Activated naive CD4-positive, alpha-beta T cell treated with anti-CD3 and anti-CD28 coated beads for 36 hours (primary cell): ENCODE measurements at regions of chr1 and their contacts with region 1.

Region 1: DNA sequence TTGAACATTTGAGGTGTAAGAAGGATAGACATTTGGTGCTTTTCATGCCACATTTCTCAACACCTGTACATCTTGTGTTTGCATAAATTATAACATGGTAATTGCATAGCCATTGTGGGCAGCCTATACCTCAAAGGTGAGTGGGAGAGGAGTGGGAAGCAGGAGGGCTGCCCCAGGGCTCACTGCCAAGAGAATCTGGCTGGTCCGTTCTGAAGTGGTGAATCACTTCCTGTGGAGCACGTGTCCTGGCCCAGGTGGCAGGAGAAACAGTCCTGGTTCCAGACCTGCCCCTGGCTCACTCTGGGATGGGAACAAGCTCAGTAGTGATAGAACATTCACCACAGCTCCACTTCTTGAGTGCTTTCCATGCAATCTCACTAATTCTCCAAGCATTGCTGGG is 11.6 kb upstream of the OLFML2B start:
- DNase-seq: peak; percentile 39
- H3K4me3 Mint-ChIP-seq: no peak overlapping the region
- H3K27ac Mint-ChIP-seq: no peak overlapping the region
- H3K4me1 Mint-ChIP-seq: peaks cover 11% of the 10 kb centered on the region
- H3K27me3 Mint-ChIP-seq: peaks cover 3% of the 10 kb centered on the region

Region 2: GRCh38 chr1:161486806-161487741 is 548.2 kb before region 1 on chr1:
- CTCF ChIA-PET with region 1: interaction called, 4 read pairs
- intact Hi-C with region 1: loop called (anchors 10 kb)
- DNase-seq: peak; percentile 50
- H3K4me3 Mint-ChIP-seq: no peak overlapping the region
- H3K27ac Mint-ChIP-seq: no peak overlapping the region
- H3K4me1 Mint-ChIP-seq: peaks cover 10% of the 10 kb centered on the region
- H3K27me3 Mint-ChIP-seq: peaks cover 24% of the 10 kb centered on the region

Region 3: GRCh38 chr1:161749509-161750407 is 285.5 kb before region 1 on chr1 and contains the start of gene DUSP12:
- CTCF ChIA-PET with region 1: interaction called, 13 read pairs
- intact Hi-C with region 1: no loop called
- DNase-seq: peak; percentile 94
- H3K4me3 Mint-ChIP-seq: peak within 1 kb of the TSS; percentile 98
- H3K27ac Mint-ChIP-seq: peak within 1 kb of the TSS; percentile 98
- H3K4me1 Mint-ChIP-seq: peaks cover 45% of the 10 kb centered on the region
- H3K27me3 Mint-ChIP-seq: no peaks in the 10 kb centered on the region
- total RNA-seq, gene DUSP12: 28.2 to 28.4 TPM

Region 4: GRCh38 chr1:161858271-161858670 is 177.0 kb before region 1 on chr1:
- CTCF ChIA-PET with region 1: interaction called, 14 read pairs
- intact Hi-C with region 1: no loop called
- DNase-seq: no peak
- H3K4me3 Mint-ChIP-seq: no peak overlapping the region
- H3K27ac Mint-ChIP-seq: no peak overlapping the region
- H3K4me1 Mint-ChIP-seq: no peaks in the 10 kb centered on the region
- H3K27me3 Mint-ChIP-seq: no peaks in the 10 kb centered on the region

Region 5: GRCh38 chr1:161864577-161864976 is 170.7 kb before region 1 on chr1:
- CTCF ChIA-PET with region 1: interaction called, 14 read pairs
- intact Hi-C with region 1: loop called (anchors 1 kb)
- DNase-seq: peak; percentile 17
- H3K4me3 Mint-ChIP-seq: no peak overlapping the region
- H3K27ac Mint-ChIP-seq: no peak overlapping the region
- H3K4me1 Mint-ChIP-seq: no peaks in the 10 kb centered on the region
- H3K27me3 Mint-ChIP-seq: no peaks in the 10 kb centered on the region

Region 6: GRCh38 chr1:162023547-162024501 is 11.4 kb before region 1 on chr1 and contains the start of gene OLFML2B:
- CTCF ChIA-PET with region 1: interaction called, 23 read pairs
- intact Hi-C with region 1: no loop called
- DNase-seq: peak; percentile 65
- H3K4me3 Mint-ChIP-seq: peak within 1 kb of the TSS; percentile 86
- H3K27ac Mint-ChIP-seq: no peak within 1 kb of the TSS
- H3K4me1 Mint-ChIP-seq: peaks cover 7% of the 10 kb centered on the region
- H3K27me3 Mint-ChIP-seq: peaks cover 18% of the 10 kb centered on the region
- total RNA-seq, gene OLFML2B: 1.7 to 2.3 TPM

Region 7: GRCh38 chr1:162091681-162092524 is 56.7 kb after region 1 on chr1:
- CTCF ChIA-PET with region 1: no interaction called
- intact Hi-C with region 1: no loop called
- DNase-seq: no peak
- H3K4me3 Mint-ChIP-seq: no peak overlapping the region
- H3K27ac Mint-ChIP-seq: no peak overlapping the region
- H3K4me1 Mint-ChIP-seq: no peaks in the 10 kb centered on the region
- H3K27me3 Mint-ChIP-seq: peaks cover 10% of the 10 kb centered on the region

Region 8: GRCh38 chr1:162117039-162117774 is 82.0 kb after region 1 on chr1:
- CTCF ChIA-PET with region 1: no interaction called
- intact Hi-C with region 1: no loop called
- DNase-seq: no peak
- H3K4me3 Mint-ChIP-seq: no peak overlapping the region
- H3K27ac Mint-ChIP-seq: no peak overlapping the region
- H3K4me1 Mint-ChIP-seq: no peaks in the 10 kb centered on the region
- H3K27me3 Mint-ChIP-seq: peaks cover 18% of the 10 kb centered on the region

Region 9: DNA sequence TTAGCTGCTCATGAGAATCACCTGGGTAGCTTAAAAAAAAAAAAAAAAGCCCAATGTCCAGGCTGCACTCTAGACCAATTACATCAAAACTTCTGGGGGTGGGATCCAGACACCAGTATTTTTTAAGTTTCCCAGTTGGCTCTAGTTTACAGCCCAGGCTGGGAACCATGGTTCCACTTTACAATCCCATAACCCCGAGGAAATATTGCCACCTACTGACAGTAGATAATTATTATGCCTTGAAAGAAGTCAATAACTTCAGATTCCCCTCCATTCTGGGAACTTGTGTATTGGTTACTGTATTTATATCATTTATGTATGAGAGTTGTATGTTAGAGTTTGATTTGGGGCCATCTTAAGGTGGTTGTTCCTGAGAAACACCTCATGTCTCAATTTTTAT is 241.3 kb after region 1 on chr1:
- CTCF ChIA-PET with region 1: no interaction called
- intact Hi-C with region 1: no loop called
- DNase-seq: no peak
- H3K4me3 Mint-ChIP-seq: no peak overlapping the region
- H3K27ac Mint-ChIP-seq: no peak overlapping the region
- H3K4me1 Mint-ChIP-seq: no peaks in the 10 kb centered on the region
- H3K27me3 Mint-ChIP-seq: peaks cover 15% of the 10 kb centered on the region